Natural killer cell (primary cell): ENCODE measurements at regions of chr1 and their contacts with region 1.

Region 1: GRCh38 chr1:222589462-222590302 is at the start of gene TAF1A:
- DNase-seq: peak; percentile 75 to 92
- ATAC-seq: peak; percentile 98 to 100 (median 99)
- H3K4me3 ChIP-seq: peak within 1 kb of the TSS; percentile 74
- H3K4me3 Mint-ChIP-seq: peak within 1 kb of the TSS; percentile 99
- H3K27ac ChIP-seq: peak within 1 kb of the TSS; percentile 80
- H3K27ac Mint-ChIP-seq: peak within 1 kb of the TSS; percentile 96
- H3K4me1 ChIP-seq: peaks cover 9% of the 10 kb centered on the region
- H3K4me1 Mint-ChIP-seq: peaks cover 27 to 33% of the 10 kb centered on the region in 2 donors
- H3K27me3 ChIP-seq: no peaks in the 10 kb centered on the region
- H3K27me3 Mint-ChIP-seq: peaks cover 0 to 2% of the 10 kb centered on the region in 2 donors
- CTCF ChIP-seq: no peak
- total RNA-seq, gene TAF1A: 5.2 to 10.4 (median 7.1) TPM

Region 2: DNA sequence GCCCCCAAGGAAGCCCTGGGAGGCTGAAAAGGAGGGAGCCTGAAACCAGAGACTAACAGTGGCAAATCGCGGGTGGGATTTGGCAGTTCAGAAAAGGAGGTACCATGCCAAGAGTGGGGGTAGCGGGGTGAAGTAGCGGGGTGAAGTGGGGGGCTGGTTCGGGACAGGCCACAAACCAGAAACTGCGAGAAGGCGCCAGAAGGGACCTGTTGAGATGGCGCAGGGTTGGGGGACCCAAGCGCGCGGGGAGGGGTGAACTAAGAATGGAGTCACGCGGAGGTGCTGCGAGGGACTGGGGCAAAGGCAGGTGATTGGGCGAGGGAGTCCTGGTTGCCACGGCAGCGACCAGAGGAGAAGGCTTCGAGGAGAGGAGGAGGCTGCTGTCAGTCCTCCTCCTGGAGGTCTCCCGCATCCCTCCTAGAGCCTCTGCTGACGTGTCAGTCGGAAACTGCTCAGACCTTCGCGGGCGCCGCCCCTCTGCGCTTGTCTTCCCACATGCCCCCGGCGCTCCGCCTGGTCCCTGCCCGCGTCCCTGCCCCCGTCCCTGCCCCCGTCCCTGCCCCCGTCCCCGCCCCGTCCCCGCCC is 27.8 kb after region 1 on chr1:
- intact Hi-C with region 1: loop called (anchors 1 kb)
- DNase-seq: peak; percentile 85 to 98
- ATAC-seq: peak; percentile 85 to 92 (median 89)
- H3K4me3 ChIP-seq: peak overlapping the region; percentile 65
- H3K4me3 Mint-ChIP-seq: peak overlapping the region; percentile 90
- H3K27ac ChIP-seq: peak overlapping the region; percentile 85
- H3K27ac Mint-ChIP-seq: peak overlapping the region; percentile 87 to 96
- H3K4me1 ChIP-seq: peaks cover 13% of the 10 kb centered on the region
- H3K4me1 Mint-ChIP-seq: peaks cover 23 to 26% of the 10 kb centered on the region in 2 donors
- H3K27me3 ChIP-seq: peaks cover 17% of the 10 kb centered on the region
- H3K27me3 Mint-ChIP-seq: peaks cover 28 to 39% of the 10 kb centered on the region in 2 donors
- CTCF ChIP-seq: no peak

Region 3: DNA sequence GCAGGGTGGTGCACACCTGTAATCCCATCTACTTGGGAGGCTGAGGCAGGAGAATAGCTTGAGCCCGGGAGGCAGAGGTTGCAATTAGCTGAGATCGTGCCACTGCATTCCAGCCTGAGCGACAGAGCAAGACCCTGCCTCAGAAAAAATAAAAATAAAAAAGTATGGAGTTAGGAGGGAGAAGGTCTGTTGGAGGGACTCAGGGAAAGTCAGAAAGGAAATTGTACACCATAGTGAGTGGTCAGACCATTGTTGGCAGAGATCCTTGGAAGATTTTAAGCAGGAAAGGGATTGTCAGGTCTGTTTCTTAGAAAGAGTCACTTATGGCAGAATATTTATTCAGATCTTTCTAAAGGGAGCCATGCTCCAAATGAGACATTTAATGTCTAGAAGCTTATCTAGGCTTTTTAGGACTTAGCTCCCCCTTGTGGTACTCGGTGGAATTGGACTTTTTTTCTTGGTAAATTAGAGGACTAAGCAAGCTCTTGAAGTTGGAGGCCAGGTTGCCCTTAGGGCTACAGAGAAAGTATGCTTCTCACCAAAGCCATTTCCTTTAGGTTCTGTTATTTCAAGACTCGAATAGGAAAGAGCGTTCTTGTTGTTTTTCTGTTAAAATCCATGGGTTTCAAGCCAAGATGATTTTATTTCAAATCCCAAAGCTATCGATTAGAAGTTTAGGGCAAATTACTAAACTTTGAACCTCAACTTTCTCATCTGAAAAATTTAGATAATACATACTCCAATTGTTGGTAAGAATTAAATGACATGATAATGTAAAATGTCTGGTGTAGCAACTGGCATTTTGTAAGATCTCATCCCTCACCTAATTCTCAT is 44.7 kb after region 1 on chr1:
- intact Hi-C with region 1: loop called (anchors 1 kb)
- DNase-seq: peak in 1 of 2 donors; percentile 90
- ATAC-seq: peak; percentile 88 to 98 (median 89)
- H3K4me3 ChIP-seq: no peak overlapping the region
- H3K4me3 Mint-ChIP-seq: no peak overlapping the region
- H3K27ac ChIP-seq: no peak overlapping the region
- H3K27ac Mint-ChIP-seq: peak overlapping the region in 1 of 2 donors; percentile 33
- H3K4me1 ChIP-seq: no peaks in the 10 kb centered on the region
- H3K4me1 Mint-ChIP-seq: peaks cover 0 to 8% of the 10 kb centered on the region in 2 donors
- H3K27me3 ChIP-seq: no peaks in the 10 kb centered on the region
- H3K27me3 Mint-ChIP-seq: no peaks in the 10 kb centered on the region
- CTCF ChIP-seq: peak; percentile 98

Region 4: DNA sequence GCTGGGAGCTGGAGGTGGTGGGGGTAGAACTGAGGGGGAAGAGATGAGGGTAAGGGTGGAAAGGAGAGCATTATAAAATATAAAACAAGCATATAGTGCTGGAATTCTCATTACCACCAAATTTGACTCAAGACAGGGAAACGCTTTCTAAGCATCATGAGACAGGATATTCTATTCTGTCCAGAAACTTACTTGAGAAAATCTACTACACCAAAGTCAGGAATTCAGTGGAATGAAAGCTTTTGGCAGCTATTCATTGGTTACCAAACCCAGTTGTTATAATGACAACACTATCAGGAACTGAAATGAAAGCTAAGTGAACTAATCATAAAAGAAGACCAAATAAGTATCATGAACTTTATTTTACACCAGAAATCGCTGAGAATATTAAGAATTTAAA is 108.1 kb after region 1 on chr1:
- intact Hi-C with region 1: no loop called
- DNase-seq: no peak
- ATAC-seq: no peak
- H3K4me3 ChIP-seq: no peak overlapping the region
- H3K4me3 Mint-ChIP-seq: no peak overlapping the region
- H3K27ac ChIP-seq: no peak overlapping the region
- H3K27ac Mint-ChIP-seq: no peak overlapping the region
- H3K4me1 ChIP-seq: peaks cover 4% of the 10 kb centered on the region
- H3K4me1 Mint-ChIP-seq: peaks cover 19 to 24% of the 10 kb centered on the region in 2 donors
- H3K27me3 ChIP-seq: no peaks in the 10 kb centered on the region
- H3K27me3 Mint-ChIP-seq: no peaks in the 10 kb centered on the region
- CTCF ChIP-seq: no peak

Region 5: GRCh38 chr1:222713091-222713961 is 123.6 kb after region 1 on chr1:
- intact Hi-C with region 1: loop called (anchors 5 kb)
- DNase-seq: peak; percentile 81 to 97
- ATAC-seq: peak; percentile 63 to 76 (median 68)
- H3K4me3 ChIP-seq: peak overlapping the region; percentile 83
- H3K4me3 Mint-ChIP-seq: peak overlapping the region; percentile 99
- H3K27ac ChIP-seq: peak overlapping the region; percentile 98
- H3K27ac Mint-ChIP-seq: peak overlapping the region; percentile 99
- H3K4me1 ChIP-seq: peaks cover 10% of the 10 kb centered on the region
- H3K4me1 Mint-ChIP-seq: peaks cover 59 to 61% of the 10 kb centered on the region in 2 donors
- H3K27me3 ChIP-seq: no peaks in the 10 kb centered on the region
- H3K27me3 Mint-ChIP-seq: no peaks in the 10 kb centered on the region
- CTCF ChIP-seq: no peak